AG04450 (cell line): ENCODE measurements at regions of chr14 and their contacts with region 1.

Region 1: GRCh38 chr14:49585803-49586672 is at the start of gene RPS29:
- DNase-seq: peak; percentile 99
- H3K4me3 ChIP-seq: peak within 1 kb of the TSS; percentile 95
- H3K27ac ChIP-seq: peak within 1 kb of the TSS; percentile 67
- H3K27me3 ChIP-seq: no peaks in the 10 kb centered on the region
- CTCF ChIP-seq: no peak
- polyA plus RNA-seq, gene RPS29: 3,597 and 3,950 TPM in 2 replicates

Region 2: DNA sequence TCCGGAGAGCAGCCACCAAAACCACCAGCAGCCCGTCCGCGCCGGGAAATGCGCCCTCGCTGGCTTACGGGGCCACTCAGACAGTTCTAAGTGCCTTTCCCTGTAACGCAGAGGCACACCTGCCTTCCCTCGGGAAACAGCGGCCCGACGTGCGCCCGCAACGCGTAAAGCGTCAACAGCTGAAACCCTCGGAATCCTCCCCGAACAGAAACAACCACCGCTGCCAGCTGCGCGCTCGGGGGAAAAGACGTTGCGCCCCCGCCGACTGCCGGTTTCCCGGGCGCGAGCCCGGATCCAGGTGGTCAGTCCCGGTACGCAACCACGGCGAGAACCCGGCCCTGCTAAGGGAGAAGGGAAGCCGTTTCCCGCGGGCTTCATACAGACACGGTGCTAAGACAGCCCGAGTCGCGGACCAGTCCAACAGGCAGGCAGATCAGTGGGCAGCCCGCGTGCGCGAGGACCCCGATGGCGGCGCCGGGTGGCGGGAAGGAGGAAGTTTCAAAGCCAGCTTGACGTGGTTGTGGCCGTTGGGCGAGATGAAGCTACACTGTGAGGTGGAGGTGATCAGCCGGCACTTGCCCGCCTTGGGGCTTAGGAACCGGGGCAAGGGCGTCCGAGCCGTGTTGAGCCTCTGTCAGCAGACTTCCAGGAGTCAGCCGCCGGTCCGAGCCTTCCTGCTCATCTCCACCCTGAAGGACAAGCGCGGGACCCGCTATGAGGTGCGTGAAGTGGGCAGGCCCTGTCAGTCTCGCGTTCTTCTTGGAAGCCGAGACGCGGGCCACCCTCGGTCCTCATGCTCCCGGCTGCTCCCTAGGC is 12.7 kb after region 1 on chr14 and contains the start of gene LRR1:
- CTCF ChIA-PET with region 1: interaction called, 11 read pairs
- POLR2A ChIA-PET with region 1: interaction called, 12 read pairs
- DNase-seq: peak; percentile 34
- H3K4me3 ChIP-seq: peak within 1 kb of the TSS; percentile 95
- H3K27ac ChIP-seq: peak within 1 kb of the TSS; percentile 99
- H3K27me3 ChIP-seq: no peaks in the 10 kb centered on the region
- CTCF ChIP-seq: no peak
- polyA plus RNA-seq, gene LRR1: 9.8 and 12.8 TPM in 2 replicates